AG04450 (cell line): ENCODE measurements at regions of chr18 and their contacts with region 1.

Region 1: DNA sequence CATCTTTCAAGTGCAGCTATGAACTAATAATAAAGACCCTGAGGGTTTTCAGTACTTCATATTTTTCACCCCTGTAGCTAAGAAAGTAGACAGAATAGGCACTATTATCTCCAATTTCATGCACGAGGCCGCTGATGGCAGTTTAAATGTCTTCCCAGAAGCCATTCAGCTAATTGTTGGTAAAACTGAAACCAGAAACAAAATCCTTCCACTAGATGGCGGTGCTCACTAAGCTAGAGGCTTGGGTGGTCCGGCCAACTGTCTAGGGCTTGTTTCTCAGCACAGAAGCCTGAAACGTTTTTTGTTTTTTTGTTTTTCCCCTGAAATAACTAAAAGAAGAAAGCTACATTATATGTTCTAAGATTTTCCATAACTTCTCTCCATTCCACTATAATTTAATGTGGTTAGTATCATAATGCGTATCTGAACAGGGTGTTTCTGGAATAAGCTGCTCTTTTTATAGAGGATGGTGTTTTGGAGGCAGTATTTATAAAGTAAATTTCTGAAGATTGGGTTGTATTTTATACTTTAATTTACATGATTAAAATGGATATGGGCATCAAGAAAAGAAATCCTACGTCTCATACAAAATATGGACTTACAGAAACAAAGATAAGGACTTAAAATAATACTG is 159.4 kb downstream of the PIK3C3 start:
- DNase-seq: peak; percentile 56
- H3K4me3 ChIP-seq: no peak overlapping the region
- H3K27ac ChIP-seq: no peak overlapping the region
- H3K27me3 ChIP-seq: no peaks in the 10 kb centered on the region
- CTCF ChIP-seq: peak; percentile 92

Region 2: DNA sequence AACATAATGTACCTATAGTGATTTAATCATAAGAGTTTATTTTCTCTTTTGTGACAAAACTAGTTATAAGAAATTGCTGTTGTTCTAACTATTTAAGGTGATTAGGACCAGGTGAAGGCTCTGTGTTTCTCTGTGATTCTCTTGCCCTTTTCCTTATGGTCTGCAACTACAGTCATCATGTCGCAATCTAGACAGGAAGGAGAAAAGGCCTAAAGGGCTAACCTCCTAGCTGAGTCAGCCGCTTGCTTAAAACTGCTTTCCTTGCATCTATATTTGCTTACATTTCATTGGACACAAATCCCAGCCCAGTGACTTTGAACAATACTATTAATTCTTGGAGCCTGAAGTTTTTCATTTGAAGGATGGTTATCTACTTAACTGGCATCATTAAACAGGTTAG is 66.3 kb before region 1 on chr18:
- CTCF ChIA-PET with region 1: interaction called, 91 read pairs
- POLR2A ChIA-PET with region 1: no interaction called
- DNase-seq: peak; percentile 55
- H3K4me3 ChIP-seq: no peak overlapping the region
- H3K27ac ChIP-seq: no peak overlapping the region
- H3K27me3 ChIP-seq: no peaks in the 10 kb centered on the region
- CTCF ChIP-seq: no peak

Region 3: GRCh38 chr18:42072407-42072806 is 42.0 kb before region 1 on chr18:
- CTCF ChIA-PET with region 1: interaction called, 23 read pairs
- POLR2A ChIA-PET with region 1: no interaction called
- DNase-seq: no peak
- H3K4me3 ChIP-seq: no peak overlapping the region
- H3K27ac ChIP-seq: no peak overlapping the region
- H3K27me3 ChIP-seq: no peaks in the 10 kb centered on the region
- CTCF ChIP-seq: 0 out of 2 replicates have a peak, but pooled peaks have one; percentile 6

Region 4: DNA sequence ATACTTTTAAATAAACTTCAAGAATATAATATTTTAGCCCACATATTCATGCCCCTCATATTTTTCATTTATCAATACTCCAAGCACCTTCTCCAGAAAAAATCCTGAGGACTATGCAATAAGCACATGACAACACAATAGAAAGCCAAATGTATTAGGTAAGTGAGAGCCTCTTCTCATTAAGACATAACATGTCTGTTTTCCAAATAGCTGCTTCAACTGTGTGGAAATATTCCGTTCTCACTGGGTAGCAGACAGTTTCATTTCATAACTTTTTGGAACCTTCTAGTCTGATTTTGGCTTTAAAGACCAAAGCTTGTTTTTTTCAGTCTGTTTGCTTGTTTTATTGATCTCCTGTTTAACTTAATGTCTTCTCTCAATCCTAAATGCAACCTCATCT is 21.6 kb before region 1 on chr18:
- CTCF ChIA-PET with region 1: interaction called, 27 read pairs
- POLR2A ChIA-PET with region 1: no interaction called
- DNase-seq: no peak
- H3K4me3 ChIP-seq: no peak overlapping the region
- H3K27ac ChIP-seq: no peak overlapping the region
- H3K27me3 ChIP-seq: no peaks in the 10 kb centered on the region
- CTCF ChIP-seq: no peak

Region 5: GRCh38 chr18:42141439-42141838 is 27.0 kb after region 1 on chr18:
- CTCF ChIA-PET with region 1: interaction called, 36 read pairs
- POLR2A ChIA-PET with region 1: no interaction called
- DNase-seq: no peak
- H3K4me3 ChIP-seq: no peak overlapping the region
- H3K27ac ChIP-seq: no peak overlapping the region
- H3K27me3 ChIP-seq: no peaks in the 10 kb centered on the region
- CTCF ChIP-seq: no peak

Region 6: DNA sequence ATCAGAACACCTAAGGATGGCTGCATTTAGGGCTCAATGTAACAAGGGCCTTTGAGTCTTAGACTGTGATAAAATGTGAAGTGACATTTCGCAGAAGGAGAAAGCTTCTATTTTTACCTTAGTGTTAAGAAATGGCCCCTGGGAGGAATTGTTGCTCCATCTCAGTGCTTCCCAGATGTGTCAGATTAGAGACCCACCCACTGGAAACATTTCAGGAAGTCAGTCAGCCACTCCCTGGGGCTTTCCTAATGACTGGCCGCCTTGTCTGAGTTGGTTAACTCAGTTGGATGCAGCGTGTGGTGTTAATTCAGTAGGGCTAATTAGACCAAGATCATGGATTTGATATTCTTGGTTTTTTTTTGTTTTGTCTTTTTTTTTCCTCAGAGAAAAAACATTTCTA is 196.5 kb after region 1 on chr18:
- CTCF ChIA-PET with region 1: interaction called, 18 read pairs
- POLR2A ChIA-PET with region 1: no interaction called
- DNase-seq: no peak
- H3K4me3 ChIP-seq: no peak overlapping the region
- H3K27ac ChIP-seq: no peak overlapping the region
- H3K27me3 ChIP-seq: no peaks in the 10 kb centered on the region
- CTCF ChIP-seq: no peak

Region 7: GRCh38 chr18:42365591-42365990 is 251.2 kb after region 1 on chr18:
- CTCF ChIA-PET with region 1: no interaction called
- POLR2A ChIA-PET with region 1: no interaction called
- DNase-seq: no peak
- H3K4me3 ChIP-seq: no peak overlapping the region
- H3K27ac ChIP-seq: no peak overlapping the region
- H3K27me3 ChIP-seq: no peaks in the 10 kb centered on the region
- CTCF ChIP-seq: no peak

Region 8: DNA sequence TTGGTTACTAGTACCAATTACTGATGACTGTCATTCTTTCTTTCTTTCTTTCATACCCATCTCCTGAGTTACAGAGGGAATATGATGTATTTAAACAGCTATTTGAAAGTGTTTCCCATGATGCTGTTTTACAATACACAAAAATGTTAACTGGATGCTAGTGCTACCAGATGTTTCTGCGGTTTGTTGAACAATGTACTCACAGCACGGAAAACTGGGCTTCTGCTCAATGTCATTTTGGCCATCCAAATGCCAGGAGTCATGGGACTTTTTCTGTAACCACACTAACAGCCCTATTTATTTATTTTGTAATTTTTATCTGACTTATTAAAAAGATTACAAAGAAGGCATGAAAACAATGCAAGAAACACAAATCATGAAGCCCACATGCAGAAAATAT is 687.3 kb after region 1 on chr18:
- CTCF ChIA-PET with region 1: no interaction called
- POLR2A ChIA-PET with region 1: no interaction called
- DNase-seq: no peak
- H3K4me3 ChIP-seq: no peak overlapping the region
- H3K27ac ChIP-seq: no peak overlapping the region
- H3K27me3 ChIP-seq: no peaks in the 10 kb centered on the region
- CTCF ChIP-seq: no peak